ENCODE measurements at regions of chr17 and their contacts with region 1.

Region 1: GRCh38 chr17:49677933-49678847 is at the start of gene SPOP:
- DNase-seq: peak; percentile 99
- H3K4me3 Mint-ChIP-seq: peak within 1 kb of the TSS; percentile 84
- H3K27ac Mint-ChIP-seq: peak within 1 kb of the TSS; percentile 96
- H3K4me1 Mint-ChIP-seq: peaks cover 44% of the 10 kb centered on the region
- H3K27me3 Mint-ChIP-seq: peaks cover 18% of the 10 kb centered on the region

Region 2: GRCh38 chr17:49694847-49695683 is 16.9 kb after region 1 on chr17:
- CTCF ChIA-PET with region 1: interaction called, 16 read pairs
- DNase-seq: peak; percentile 80
- H3K4me3 Mint-ChIP-seq: no peak overlapping the region
- H3K27ac Mint-ChIP-seq: peak overlapping the region; percentile 33
- H3K4me1 Mint-ChIP-seq: peaks cover 39% of the 10 kb centered on the region
- H3K27me3 Mint-ChIP-seq: peaks cover 5% of the 10 kb centered on the region

Measured in activated naive CD4-positive, alpha-beta T cell treated with anti-CD3 and anti-CD28 coated beads, Interleukin-2, amount 10 ng/mL, durations not matched to agents 7 days and 5 days (primary cell).